GM23248 (cell line): ENCODE measurements at regions of chr11 and their contacts with region 1.

Region 1: DNA sequence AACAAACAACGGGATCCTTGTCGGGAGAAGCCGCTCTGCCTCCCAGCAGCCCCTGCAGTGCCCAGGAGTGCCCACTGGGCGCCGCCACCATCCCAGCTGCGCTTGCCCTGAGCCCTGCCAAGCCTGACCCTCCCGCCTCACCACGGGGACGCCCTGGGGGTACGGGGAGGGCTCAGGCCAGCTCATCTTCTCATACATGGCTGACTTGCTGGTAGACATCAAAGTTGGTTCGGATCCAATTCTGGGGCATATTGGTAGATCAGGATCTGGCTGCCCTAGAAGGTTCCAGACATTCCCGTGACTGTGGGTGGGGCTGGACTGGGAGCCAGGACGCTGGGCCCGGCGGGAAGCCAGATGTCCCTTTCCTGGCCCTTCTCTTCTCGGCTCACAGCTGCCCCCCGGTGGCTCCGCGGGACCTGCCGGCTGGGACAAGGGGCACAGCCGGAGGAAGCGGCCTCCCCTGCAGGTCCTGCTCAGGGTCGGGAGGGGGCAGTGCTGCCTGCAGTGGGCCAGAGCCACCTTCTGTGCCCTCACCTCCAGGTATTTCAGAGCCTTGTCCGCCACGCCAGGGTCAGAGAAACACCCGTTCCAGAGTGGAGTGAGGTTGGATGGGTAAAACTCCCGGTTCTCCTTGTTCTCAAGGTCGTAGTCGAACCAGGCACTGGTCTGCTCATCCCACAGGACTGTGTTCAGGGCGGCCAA is 10.6 kb upstream of the TREH start:
- DNase-seq: peak; percentile 95
- H3K4me3 ChIP-seq: peak overlapping the region; percentile 68
- H3K27ac ChIP-seq: peak overlapping the region; percentile 38; the same call in 1 of the 2 replicates
- H3K4me1 ChIP-seq: 0 out of 2 replicates have a peak, but pooled peaks cover 6% of the 10 kb centered on the region
- H3K27me3 ChIP-seq: no peaks in the 10 kb centered on the region

Region 2: GRCh38 chr11:118939953-118940598 is 250.1 kb after region 1 on chr11:
- in situ Hi-C with region 1: loop called (anchors 10 kb)
- DNase-seq: peak; percentile 16
- H3K4me3 ChIP-seq: no peak overlapping the region
- H3K27ac ChIP-seq: no peak overlapping the region
- H3K4me1 ChIP-seq: peaks cover 14% of the 10 kb centered on the region
- H3K27me3 ChIP-seq: no peaks in the 10 kb centered on the region

Region 3: GRCh38 chr11:119057000-119057769 is 367.2 kb after region 1 on chr11 and contains the start of gene HYOU1:
- in situ Hi-C with region 1: no loop called
- DNase-seq: peak; percentile 99
- H3K4me3 ChIP-seq: peak within 1 kb of the TSS; percentile 91
- H3K27ac ChIP-seq: peak within 1 kb of the TSS; percentile 82
- H3K4me1 ChIP-seq: peaks cover 13% of the 10 kb centered on the region; the same call in 1 of the 2 replicates
- H3K27me3 ChIP-seq: no peaks in the 10 kb centered on the region
- total RNA-seq, gene HYOU1: 85.4 and 97.0 TPM in 2 replicates